Panc1 (cell line): ENCODE measurements at regions of chr9 and their contacts with region 1.

Region 1: GRCh38 chr9:107624234-107624960 is 134.8 kb upstream of the KLF4 start:
- DNase-seq: no peak
- ATAC-seq: no peak
- H3K4me3 ChIP-seq: no peak overlapping the region
- H3K27ac ChIP-seq: no peak overlapping the region
- H3K4me1 ChIP-seq: no peaks in the 10 kb centered on the region
- H3K27me3 ChIP-seq: no peaks in the 10 kb centered on the region
- CTCF ChIP-seq: no peak

Region 2: GRCh38 chr9:107576962-107577776 is 47.2 kb before region 1 on chr9:
- CTCF ChIA-PET with region 1: no interaction called
- POLR2A ChIA-PET with region 1: interaction called, 13 read pairs
- in situ Hi-C with region 1: no loop called
- intact Hi-C with region 1: no loop called
- DNase-seq: no peak
- ATAC-seq: no peak
- H3K4me3 ChIP-seq: no peak overlapping the region
- H3K27ac ChIP-seq: no peak overlapping the region
- H3K4me1 ChIP-seq: no peaks in the 10 kb centered on the region
- H3K27me3 ChIP-seq: no peaks in the 10 kb centered on the region
- CTCF ChIP-seq: no peak

Region 3: DNA sequence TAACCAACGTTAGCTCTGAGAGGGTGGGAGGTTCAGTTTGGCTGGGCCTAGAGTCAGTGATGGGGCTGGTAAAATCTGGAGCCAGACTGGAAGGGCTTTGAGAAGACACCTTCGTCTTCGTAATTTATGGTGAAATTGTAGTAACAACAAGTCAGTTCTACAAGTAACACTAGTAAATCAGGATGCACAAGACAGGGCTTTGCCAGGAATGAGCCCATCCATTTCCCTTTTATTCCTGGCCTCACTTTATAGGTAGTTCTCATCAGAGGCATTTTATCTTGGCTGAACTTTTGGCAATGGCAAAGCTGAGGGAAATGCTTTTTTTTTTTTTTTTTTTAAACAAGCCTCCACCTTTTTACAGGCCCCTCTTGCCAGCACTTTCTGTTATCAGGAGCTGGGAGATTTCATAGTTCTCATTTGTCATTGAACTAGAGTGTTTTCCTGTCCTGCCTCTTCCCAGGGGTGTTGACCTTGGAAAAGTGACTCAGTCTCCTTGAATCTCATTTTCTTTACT is 24.3 kb before region 1 on chr9:
- CTCF ChIA-PET with region 1: interaction called, 10 read pairs
- POLR2A ChIA-PET with region 1: no interaction called
- in situ Hi-C with region 1: no loop called
- intact Hi-C with region 1: no loop called
- DNase-seq: no peak
- ATAC-seq: no peak
- H3K4me3 ChIP-seq: no peak overlapping the region
- H3K27ac ChIP-seq: no peak overlapping the region
- H3K4me1 ChIP-seq: no peaks in the 10 kb centered on the region
- H3K27me3 ChIP-seq: no peaks in the 10 kb centered on the region
- CTCF ChIP-seq: no peak